PC-9 (cell line): ENCODE measurements at regions of chr6 and their contacts with region 1.

Region 1: DNA sequence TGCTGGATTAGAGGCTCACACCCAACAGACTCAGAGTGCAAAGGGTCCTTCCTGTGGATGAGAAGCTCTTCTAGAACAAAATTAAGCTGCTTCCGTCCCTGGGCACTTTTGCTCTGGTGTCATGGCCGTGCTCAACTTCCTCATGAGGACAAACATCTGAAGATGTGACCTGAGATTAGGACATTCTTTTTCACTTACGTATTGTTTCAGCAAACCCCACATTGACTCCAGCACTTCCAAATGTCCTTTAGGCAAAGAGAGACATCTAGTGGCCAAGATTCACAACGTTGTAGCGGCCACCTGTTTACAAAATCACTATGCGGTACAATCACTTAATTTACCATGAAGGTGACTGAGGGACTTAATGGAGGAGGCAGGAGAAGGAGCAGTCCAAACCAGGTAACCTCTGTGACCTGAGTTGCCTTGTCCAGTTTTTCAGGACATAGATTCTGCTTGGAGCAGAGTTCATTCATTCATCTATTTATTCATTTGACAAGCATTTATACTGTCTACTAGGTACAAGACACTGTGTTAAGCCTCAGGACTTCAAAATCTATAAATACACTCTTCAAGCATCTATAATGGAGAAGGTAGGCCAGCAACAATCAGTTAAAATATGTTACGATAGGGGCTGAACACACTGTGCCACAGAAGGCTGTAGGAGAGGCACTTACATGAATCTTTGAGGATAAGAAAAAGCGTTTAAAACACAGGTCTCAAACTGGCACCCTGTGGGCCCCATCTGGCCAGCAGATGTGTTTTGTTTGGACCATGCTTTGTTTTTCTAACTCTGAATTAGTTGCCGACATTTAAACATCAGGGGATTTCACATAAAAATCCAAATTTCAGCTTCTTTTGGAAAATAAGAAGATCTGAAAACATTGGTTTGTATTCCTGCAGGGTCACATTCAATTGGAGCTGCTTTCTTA is 5.6 kb upstream of the ADGRF1 start:
- DNase-seq: peak; percentile 72 to 99
- H3K4me3 ChIP-seq: no peak overlapping the region; the same call in 1 of the 2 replicates
- H3K27ac ChIP-seq: peak overlapping the region; percentile 98
- H3K4me1 ChIP-seq: peaks cover 60% of the 10 kb centered on the region
- H3K27me3 ChIP-seq: no peaks in the 10 kb centered on the region
- CTCF ChIP-seq: peak; percentile 80

Region 2: GRCh38 chr6:46652603-46653438 is 394.9 kb before region 1 on chr6 and contains the starts of genes CYP39A1 and SLC25A27:
- CTCF ChIA-PET with region 1: no interaction called
- POLR2A ChIA-PET with region 1: no interaction called
- intact Hi-C with region 1: loop called (anchors 5 kb)
- DNase-seq: peak; percentile 83 to 95
- H3K4me3 ChIP-seq: peak within 1 kb of the TSS; percentile 93
- H3K27ac ChIP-seq: peak within 1 kb of the TSS; percentile 27; the same call in 1 of the 2 replicates
- H3K4me1 ChIP-seq: peaks cover 54% of the 10 kb centered on the region
- H3K27me3 ChIP-seq: no peaks in the 10 kb centered on the region
- CTCF ChIP-seq: no peak
- total RNA-seq, gene CYP39A1: 2.9 and 5.6 TPM in 2 replicates
- total RNA-seq, gene SLC25A27: 25.0 and 27.1 TPM in 2 replicates

Region 3: GRCh38 chr6:47034919-47035318 is 12.8 kb before region 1 on chr6:
- CTCF ChIA-PET with region 1: interaction called, 4 read pairs
- POLR2A ChIA-PET with region 1: interaction called, 28 read pairs
- intact Hi-C with region 1: loop called (anchors 1 kb)
- DNase-seq: peak; percentile 83 to 99
- H3K4me3 ChIP-seq: peak overlapping the region; percentile 41; the same call in 1 of the 2 replicates
- H3K27ac ChIP-seq: peak overlapping the region; percentile 98
- H3K4me1 ChIP-seq: peaks cover 68% of the 10 kb centered on the region
- H3K27me3 ChIP-seq: no peaks in the 10 kb centered on the region
- CTCF ChIP-seq: no peak